ENCODE measurements at regions of chr4 and their contacts with region 1.

Region 1: DNA sequence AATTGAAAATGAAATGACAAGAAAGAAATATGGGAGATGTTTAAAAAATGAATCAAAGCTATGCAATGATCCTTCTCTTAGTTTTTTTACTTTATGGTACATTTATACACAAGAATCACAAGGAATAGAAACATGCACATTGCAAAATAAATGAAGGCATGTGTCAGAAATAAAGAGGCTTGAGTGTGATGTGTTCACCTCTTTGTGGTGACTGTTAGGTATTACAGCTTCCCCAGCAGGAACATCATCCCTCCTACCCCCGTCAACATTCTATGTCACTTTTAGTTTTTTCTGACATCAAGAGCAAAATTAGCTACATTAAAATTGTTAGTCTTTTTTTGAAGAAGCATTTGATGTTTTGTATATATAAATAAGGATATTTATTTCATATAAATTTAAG is 214.8 kb downstream of the SLC4A4 start:
- DNase-seq: no peak
- ATAC-seq: peak; percentile 59

Region 2: DNA sequence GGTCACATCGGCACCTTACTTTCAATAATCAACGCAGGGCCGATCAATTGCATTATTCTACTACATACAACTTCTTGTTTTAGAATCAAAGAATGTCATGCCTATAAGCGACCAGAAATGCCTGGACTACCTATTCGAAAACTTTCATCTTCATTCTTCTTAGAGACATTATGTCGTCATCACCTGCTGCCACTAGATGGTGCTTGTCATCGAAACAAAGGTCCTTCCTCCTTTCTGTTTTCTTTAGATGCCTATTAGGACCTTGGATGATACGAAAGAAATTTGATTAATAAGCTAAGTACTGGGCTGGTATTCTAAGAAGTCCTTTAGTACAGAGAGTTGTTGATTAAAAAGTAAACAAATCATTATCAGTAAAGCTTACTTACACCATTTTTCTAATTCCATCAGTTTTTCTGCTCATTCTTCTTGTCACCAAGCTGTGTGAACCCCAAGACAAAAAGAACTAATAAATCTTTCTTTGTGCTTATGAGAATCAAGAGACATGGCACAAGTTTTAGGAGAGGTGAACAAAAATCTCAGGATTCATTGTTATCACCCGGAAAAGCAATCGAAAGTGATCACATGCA is 369.3 kb before region 1 on chr4:
- intact Hi-C with region 1: loop called (anchors 2 kb)
- DNase-seq: no peak
- ATAC-seq: no peak

Region 3: DNA sequence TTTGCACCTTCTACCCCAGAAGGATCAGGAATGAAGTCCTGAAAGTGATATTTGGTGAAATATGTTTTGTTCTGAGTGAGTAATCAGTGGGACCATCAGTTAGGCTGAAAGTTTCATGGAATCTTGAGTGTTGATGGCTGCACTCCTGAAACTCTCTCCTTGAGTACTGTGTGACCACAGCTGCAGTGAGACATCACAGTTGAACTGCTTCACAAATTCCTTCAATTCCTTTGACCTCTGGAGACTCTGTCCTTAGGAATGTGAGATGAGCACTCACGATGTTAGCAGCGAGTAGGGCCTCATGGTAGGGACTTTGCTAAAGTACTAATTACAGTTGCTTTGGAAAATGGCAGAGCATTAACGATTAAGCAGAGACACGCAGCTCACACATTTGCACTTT is 357.7 kb before region 1 on chr4:
- intact Hi-C with region 1: no loop called
- DNase-seq: no peak
- ATAC-seq: no peak

Region 4: GRCh38 chr4:71239365-71239764 is 314.2 kb before region 1 on chr4:
- intact Hi-C with region 1: loop called (anchors 5 kb)
- DNase-seq: no peak
- ATAC-seq: no peak

Region 5: GRCh38 chr4:71625005-71625404 is 71.4 kb after region 1 on chr4:
- intact Hi-C with region 1: no loop called
- DNase-seq: no peak
- ATAC-seq: no peak

Measured in left ventricle myocardium superior (tissue), 1 donor.